Right cardiac atrium (tissue), 5 donors: ENCODE measurements at regions of chr7 and their contacts with region 1.

Region 1: GRCh38 chr7:151017953-151018420 is 6.3 kb downstream of the ATG9B start:
- DNase-seq: peak; percentile 69 to 91 (median 91)
- ATAC-seq: peak; percentile 52 to 58
- H3K4me3 ChIP-seq: no peak overlapping the region
- H3K27ac ChIP-seq: no peak overlapping the region
- H3K4me1 ChIP-seq: peaks cover 8% of the 10 kb centered on the region
- H3K27me3 ChIP-seq: no peaks in the 10 kb centered on the region

Region 2: DNA sequence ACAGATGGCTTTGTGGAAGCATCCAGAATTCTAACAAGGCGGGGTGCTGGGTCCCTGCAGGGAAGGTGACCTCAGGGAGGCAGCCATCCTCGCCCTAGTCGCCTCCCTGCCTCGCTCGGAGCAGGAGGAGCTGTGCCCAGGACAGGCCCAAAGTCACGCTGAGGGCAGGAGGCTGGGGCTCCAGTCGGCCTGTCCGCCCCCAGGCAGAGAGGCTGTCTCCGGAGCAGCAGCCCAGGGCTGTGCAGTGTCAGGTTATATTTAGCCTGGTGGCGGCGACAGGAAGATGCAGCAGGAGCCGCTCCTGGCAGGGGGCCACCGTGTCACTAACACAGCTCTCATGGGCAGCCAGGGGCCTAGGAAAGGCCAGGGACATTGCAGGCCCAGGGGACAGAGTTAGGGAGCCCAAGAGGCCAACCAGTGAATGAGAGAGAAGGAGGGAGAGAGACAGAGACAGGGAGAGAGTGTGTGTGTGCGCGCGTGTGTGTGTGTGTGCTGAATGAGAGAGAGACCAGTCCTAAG is 53.3 kb before region 1 on chr7:
- intact Hi-C with region 1: no loop called
- DNase-seq: peak; percentile 78 to 93 (median 92)
- ATAC-seq: peak; percentile 74 to 81
- H3K4me3 ChIP-seq: no peak overlapping the region
- H3K27ac ChIP-seq: peak overlapping the region; percentile 93
- H3K4me1 ChIP-seq: peaks cover 12% of the 10 kb centered on the region
- H3K27me3 ChIP-seq: no peaks in the 10 kb centered on the region

Region 3: GRCh38 chr7:151110941-151111645 is 93.1 kb after region 1 on chr7:
- intact Hi-C with region 1: loop called in 2 of 4 experiments (anchors 10 kb)
- DNase-seq: peak; percentile 82 to 92 (median 90)
- ATAC-seq: peak; percentile 83
- H3K4me3 ChIP-seq: no peak overlapping the region
- H3K27ac ChIP-seq: no peak overlapping the region
- H3K4me1 ChIP-seq: peaks cover 3% of the 10 kb centered on the region
- H3K27me3 ChIP-seq: no peaks in the 10 kb centered on the region